ENCODE measurements at regions of chr1 and their contacts with region 1.

Region 1: GRCh38 chr1:6245086-6245868 is 1.3 kb downstream of the HES3 start:
- DNase-seq: peak; percentile 96
- ATAC-seq: peak; percentile 48
- H3K4me3 ChIP-seq: peak overlapping the region; percentile 68
- H3K27ac ChIP-seq: no peak overlapping the region
- H3K4me1 ChIP-seq: peaks cover 21% of the 10 kb centered on the region
- H3K27me3 ChIP-seq: peaks cover 23% of the 10 kb centered on the region
- CTCF ChIP-seq: peak; percentile 94

Region 2: GRCh38 chr1:6108937-6109614 is 136.2 kb before region 1 on chr1:
- CTCF ChIA-PET with region 1: interaction called, 12 read pairs
- POLR2A ChIA-PET with region 1: no interaction called
- intact Hi-C with region 1: loop called (anchors 1 kb)
- DNase-seq: peak; percentile 89
- ATAC-seq: peak; percentile 96
- H3K4me3 ChIP-seq: no peak overlapping the region
- H3K27ac ChIP-seq: no peak overlapping the region
- H3K4me1 ChIP-seq: peaks cover 4% of the 10 kb centered on the region; the same call in 1 of the 2 replicates
- H3K27me3 ChIP-seq: no peaks in the 10 kb centered on the region
- CTCF ChIP-seq: peak; percentile 96

Region 3: DNA sequence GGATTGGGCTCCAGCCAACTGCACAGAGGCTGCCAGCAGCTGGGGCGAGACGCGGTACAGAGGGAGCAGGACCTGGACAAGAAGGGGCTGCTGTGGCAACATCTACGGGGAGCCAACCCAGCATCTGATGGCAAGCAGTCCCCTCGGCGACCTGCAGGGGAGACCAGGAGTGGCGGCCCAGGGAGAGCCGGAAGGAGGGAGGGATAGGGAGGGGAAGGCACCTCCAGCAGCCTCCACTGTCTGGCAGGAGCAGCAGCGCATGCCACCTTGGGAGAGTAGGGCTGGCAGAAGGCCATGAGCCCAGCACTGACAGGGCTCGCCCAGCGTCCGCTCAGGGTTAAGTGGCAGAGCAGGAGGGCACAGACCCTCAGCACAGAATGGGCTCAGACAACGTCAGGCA is 82.5 kb before region 1 on chr1:
- CTCF ChIA-PET with region 1: no interaction called
- POLR2A ChIA-PET with region 1: no interaction called
- intact Hi-C with region 1: no loop called
- DNase-seq: no peak
- ATAC-seq: no peak
- H3K4me3 ChIP-seq: no peak overlapping the region
- H3K27ac ChIP-seq: no peak overlapping the region
- H3K4me1 ChIP-seq: peaks cover 7% of the 10 kb centered on the region
- H3K27me3 ChIP-seq: no peaks in the 10 kb centered on the region
- CTCF ChIP-seq: peak; percentile 27; the same call in 1 of the 2 replicates

Region 4: GRCh38 chr1:6205849-6206519 is 39.3 kb before region 1 on chr1 and contains the start of gene RNF207:
- CTCF ChIA-PET with region 1: interaction called, 42 read pairs
- POLR2A ChIA-PET with region 1: interaction called, 4 read pairs
- intact Hi-C with region 1: loop called (anchors 5 kb)
- DNase-seq: peak; percentile 95
- ATAC-seq: peak; percentile 69
- H3K4me3 ChIP-seq: peak within 1 kb of the TSS; percentile 79
- H3K27ac ChIP-seq: peak within 1 kb of the TSS; percentile 81
- H3K4me1 ChIP-seq: peaks cover 14% of the 10 kb centered on the region; the same call in 1 of the 2 replicates
- H3K27me3 ChIP-seq: no peaks in the 10 kb centered on the region
- CTCF ChIP-seq: no peak
- total RNA-seq, gene RNF207: 95.4 and 128 TPM in 2 replicates

Region 5: DNA sequence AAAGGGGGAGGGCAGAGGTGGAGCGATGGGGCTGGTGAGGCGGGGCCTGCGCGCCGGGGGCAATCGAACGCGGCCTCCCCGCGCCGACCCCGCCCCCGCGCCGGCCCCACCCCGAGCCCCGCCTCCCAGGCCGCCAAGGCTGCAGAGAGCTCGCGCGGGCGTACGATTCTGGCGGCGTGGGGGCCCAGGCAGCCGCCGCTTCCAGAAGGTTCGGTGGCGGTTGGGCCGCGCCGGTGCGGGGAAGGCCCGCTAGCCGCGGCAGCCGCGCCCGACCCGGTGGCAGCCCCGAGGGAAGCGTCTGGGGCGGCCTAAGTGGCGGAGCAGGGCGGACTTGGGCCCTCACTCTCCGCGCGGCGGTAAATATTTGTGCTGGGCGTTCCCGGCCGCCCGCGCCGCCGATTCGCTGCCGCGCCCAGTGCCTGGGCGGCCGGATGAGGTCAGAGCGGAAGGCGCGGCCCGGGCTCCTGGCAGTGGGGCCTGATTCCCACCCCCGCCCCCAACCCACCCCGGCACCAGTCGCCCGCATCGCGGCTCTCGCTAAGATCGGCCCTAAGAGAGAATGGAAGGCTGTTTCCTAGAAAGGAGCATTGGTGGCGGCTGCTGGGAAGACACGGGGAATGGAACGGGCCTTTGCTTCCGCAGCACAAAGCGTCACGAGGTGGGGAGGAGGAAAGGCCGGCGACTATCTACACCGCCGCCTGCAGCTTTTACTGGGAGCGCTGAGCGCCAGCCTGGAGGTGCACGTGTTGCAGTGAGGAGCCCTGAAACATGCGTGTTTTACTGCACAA is 148.3 kb after region 1 on chr1 and contains the start of gene ACOT7:
- CTCF ChIA-PET with region 1: interaction called, 10 read pairs
- POLR2A ChIA-PET with region 1: no interaction called
- intact Hi-C with region 1: no loop called
- DNase-seq: peak; percentile 97
- ATAC-seq: peak; percentile 87
- H3K4me3 ChIP-seq: peak within 1 kb of the TSS; percentile 78
- H3K27ac ChIP-seq: peak within 1 kb of the TSS; percentile 90
- H3K4me1 ChIP-seq: peaks cover 17% of the 10 kb centered on the region
- H3K27me3 ChIP-seq: no peaks in the 10 kb centered on the region
- CTCF ChIP-seq: peak; percentile 22; the same call in 1 of the 2 replicates
- total RNA-seq, gene ACOT7: 164 and 165 TPM in 2 replicates